ENCODE measurements at regions of chr4 and their contacts with region 1.

Region 1: DNA sequence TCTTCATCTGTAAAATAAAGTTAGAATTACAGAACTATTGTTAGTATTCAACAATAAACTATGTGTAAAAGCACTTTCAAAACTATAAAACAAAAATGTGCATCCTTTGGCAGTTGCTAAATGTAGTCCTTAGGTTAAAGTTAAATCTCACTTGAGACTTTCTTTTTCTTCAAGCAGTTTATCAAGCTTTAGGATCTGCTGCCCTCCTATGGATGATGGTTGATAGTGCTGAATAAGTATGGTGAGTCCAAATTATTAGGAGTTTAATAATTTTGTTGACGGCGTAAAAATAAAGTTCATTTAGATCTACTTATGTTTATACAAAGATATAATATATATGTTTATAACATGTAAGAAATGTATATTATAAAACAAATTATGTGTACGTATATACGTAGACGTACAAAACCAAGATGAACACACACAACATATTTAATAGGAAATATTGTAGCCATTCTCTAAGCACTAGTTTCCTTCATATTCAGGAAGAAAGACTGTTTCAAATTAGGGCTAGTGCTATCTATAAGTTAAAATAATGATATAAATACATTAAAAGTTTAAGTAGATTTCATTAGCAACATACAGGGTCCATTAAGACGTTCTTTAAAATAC is 22.3 kb downstream of the UGT2A2 start:
- DNase-seq: peak; percentile 38
- H3K4me3 ChIP-seq: no peak overlapping the region
- H3K27ac ChIP-seq: no peak overlapping the region
- H3K4me1 ChIP-seq: no peaks in the 10 kb centered on the region
- H3K27me3 ChIP-seq: no peaks in the 10 kb centered on the region
- CTCF ChIP-seq: peak; percentile 52; the same call in 1 of the 2 replicates

Region 2: DNA sequence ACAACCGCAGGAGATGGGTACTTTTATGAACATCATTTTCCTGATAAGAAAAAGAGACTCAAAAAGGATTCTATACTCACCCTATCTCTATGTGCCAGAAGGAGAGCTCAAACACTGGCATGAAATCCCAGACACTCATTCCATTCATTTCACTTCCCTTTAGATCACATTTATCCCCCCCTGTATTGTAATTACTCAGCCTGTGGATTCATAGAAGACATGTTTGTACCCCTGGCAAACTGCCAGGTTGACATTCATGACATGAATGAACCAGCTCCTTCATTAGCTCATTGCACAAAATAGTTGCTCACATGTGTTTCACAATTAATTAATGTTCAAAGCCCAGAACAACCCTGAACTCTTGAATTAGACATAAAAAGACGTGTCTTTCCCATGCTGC is 748.3 kb after region 1 on chr4:
- CTCF ChIA-PET with region 1: no interaction called
- POLR2A ChIA-PET with region 1: interaction called, 15 read pairs
- intact Hi-C with region 1: no loop called
- DNase-seq: no peak
- H3K4me3 ChIP-seq: no peak overlapping the region
- H3K27ac ChIP-seq: no peak overlapping the region
- H3K4me1 ChIP-seq: no peaks in the 10 kb centered on the region
- H3K27me3 ChIP-seq: no peaks in the 10 kb centered on the region
- CTCF ChIP-seq: no peak

Region 3: GRCh38 chr4:70515367-70516245 is 898.4 kb after region 1 on chr4:
- CTCF ChIA-PET with region 1: no interaction called
- POLR2A ChIA-PET with region 1: no interaction called
- intact Hi-C with region 1: no loop called
- DNase-seq: no peak
- H3K4me3 ChIP-seq: no peak overlapping the region
- H3K27ac ChIP-seq: no peak overlapping the region
- H3K4me1 ChIP-seq: no peaks in the 10 kb centered on the region
- H3K27me3 ChIP-seq: no peaks in the 10 kb centered on the region
- CTCF ChIP-seq: no peak